ENCODE measurements at regions of chr11 and their contacts with region 1.

Region 1: DNA sequence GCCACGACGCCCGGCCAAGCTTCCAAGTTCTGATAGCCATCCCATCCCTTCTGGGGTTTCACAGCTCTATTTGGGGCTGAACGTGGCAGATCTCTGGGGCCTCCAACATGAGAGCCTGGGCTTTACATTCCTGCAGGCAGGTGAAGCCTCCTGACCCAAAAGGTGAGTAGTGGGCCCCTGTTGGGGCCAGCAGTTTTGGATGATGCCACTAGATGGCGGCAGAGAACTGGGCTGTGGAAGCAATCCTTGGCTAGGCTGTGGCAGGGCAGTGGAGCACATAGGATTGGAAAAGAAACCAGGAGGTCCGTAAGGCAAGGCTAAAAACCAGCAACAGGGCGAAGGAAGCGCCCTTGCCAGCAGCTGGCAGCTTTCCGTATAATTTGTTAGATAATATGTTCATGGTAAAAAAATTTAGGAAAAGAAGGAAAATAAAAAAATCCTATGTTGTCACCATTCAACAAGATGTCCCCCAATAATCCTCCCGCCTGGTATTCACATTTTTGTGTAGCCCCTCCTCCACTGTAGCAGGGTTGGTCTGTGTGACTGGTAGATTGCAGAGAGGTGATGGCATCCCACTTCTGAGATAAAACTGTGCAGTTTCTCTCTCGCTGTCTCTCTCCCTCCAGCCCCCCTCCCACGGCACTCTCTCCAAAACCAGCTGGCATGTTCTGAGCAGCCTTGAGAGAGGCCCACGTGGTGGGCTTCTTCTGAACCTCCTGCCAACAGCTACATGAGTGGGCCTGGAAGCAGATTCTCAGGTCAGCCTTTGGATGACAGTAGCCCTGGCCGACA is 43.6 kb upstream of the OR4B1 start:
- DNase-seq: peak; percentile 39
- H3K4me3 ChIP-seq: peak overlapping the region; percentile 5; the same call in 1 of the 2 replicates
- H3K27ac ChIP-seq: no peak overlapping the region
- H3K27me3 ChIP-seq: peaks cover 4% of the 10 kb centered on the region
- CTCF ChIP-seq: peak; percentile 99

Region 2: DNA sequence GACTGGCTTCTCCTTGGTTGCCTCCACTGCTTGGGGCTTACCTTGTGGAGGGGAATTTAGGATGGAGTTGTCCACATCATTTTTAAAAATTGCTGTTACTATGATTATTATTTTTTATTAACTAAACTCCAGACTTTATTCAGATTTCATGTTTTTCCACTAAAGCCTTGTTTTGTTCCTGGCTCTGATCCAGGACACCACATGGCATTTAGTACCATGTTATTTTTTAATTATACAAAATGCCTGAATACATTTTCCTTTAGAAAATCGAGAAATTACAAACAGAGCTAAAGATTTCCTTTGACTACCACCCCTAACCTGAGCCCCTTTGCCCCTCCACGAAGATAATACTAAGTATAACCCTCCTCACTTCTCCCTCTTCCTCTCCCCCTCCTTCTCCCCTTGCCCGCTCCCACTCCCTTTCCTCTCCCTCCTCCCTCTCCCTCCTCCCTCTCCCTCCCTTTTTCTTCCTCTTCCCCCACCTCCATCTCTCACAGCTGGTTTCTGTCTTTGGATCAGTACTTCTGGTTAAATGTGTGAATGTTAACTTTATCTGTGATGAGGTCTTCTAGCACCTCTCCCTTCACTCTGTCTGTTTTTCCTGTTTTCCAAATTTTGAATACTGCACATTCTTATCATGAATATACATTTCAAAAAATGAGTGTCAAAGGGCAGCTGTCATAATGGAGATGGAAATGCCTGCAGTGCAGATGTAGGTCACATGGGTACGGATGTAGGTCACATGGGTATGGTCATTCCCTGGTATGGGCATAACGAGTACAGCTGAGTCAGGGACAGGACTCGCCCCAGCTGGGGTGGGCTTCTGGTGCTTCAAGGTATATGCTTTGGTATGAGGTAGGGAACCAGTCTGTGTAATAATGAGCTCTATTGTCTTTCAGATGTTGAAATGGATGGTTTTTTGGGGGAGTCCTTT is 10.8 kb before region 1 on chr11:
- CTCF ChIA-PET with region 1: interaction called, 21 read pairs
- POLR2A ChIA-PET with region 1: no interaction called
- DNase-seq: no peak
- H3K4me3 ChIP-seq: no peak overlapping the region
- H3K27ac ChIP-seq: no peak overlapping the region
- H3K27me3 ChIP-seq: no peaks in the 10 kb centered on the region
- CTCF ChIP-seq: no peak

Region 3: DNA sequence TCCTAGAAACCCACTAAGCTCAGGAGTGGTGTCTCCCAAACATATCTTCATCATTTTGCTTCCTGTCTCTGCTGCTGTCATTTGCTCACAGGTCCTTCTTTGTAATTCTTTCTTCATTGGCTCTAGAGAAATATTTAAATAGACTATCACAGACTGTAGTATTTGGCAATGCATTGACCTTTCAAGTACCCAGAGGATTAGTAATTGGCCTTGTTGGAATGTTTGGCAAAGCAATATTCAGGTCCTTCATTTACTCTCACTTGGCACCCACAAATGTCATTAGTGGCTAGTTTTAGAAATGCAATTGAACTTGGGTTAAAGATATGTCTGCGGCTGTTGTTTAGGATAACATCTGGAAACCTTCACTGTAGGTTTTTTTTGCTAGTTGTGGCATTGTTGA is 181.7 kb after region 1 on chr11:
- CTCF ChIA-PET with region 1: no interaction called
- POLR2A ChIA-PET with region 1: no interaction called
- DNase-seq: no peak
- H3K4me3 ChIP-seq: no peak overlapping the region
- H3K27ac ChIP-seq: no peak overlapping the region
- H3K27me3 ChIP-seq: no peaks in the 10 kb centered on the region
- CTCF ChIP-seq: no peak